ENCODE measurements at regions of chr22 and their contacts with region 1.

Region 1: GRCh38 chr22:41697126-41697775 is 2.1 kb upstream of the MEI1 start:
- DNase-seq: peak; percentile 78 to 98 (median 88)
- ATAC-seq: peak; percentile 81
- H3K4me3 ChIP-seq: no peak overlapping the region
- H3K4me3 Mint-ChIP-seq: peak overlapping the region; percentile 64
- H3K27ac ChIP-seq: no peak overlapping the region
- H3K27ac Mint-ChIP-seq: no peak overlapping the region
- H3K4me1 ChIP-seq: peaks cover 16% of the 10 kb centered on the region
- H3K4me1 Mint-ChIP-seq: peaks cover 10% of the 10 kb centered on the region
- H3K27me3 ChIP-seq: no peaks in the 10 kb centered on the region
- H3K27me3 Mint-ChIP-seq: no peaks in the 10 kb centered on the region
- CTCF ChIP-seq: peak; percentile 89

Region 2: DNA sequence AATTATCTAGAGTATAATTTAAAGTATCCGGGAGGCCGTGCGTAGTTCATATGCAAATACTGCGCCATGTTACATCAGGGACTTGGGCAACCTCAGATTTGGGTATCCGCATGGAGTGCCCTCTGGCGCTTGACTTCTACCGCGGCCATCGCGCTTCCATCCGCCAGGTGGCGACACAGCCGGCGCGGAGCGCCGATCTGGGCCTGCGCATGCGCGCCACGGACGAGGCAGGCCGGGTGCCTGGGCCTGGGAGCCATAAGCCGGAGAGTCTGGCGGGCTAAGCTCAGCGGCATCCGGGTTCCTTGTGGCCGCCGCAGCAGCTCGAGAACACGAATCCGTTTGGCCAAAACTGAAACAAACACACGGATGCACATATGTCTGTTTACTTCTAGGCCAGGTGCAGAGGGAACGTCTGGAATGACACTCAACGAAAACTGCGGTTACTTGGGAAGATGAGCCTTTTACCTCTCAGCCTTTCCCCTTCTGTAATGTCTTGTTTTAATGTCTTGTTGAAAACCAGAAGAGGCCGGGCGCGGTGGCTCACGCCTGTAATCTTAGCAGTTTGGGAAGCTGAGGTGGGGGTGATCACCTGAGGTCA is 30.5 kb before region 1 on chr22:
- CTCF ChIA-PET with region 1: interaction called, 21 read pairs
- POLR2A ChIA-PET with region 1: interaction called, 3 read pairs
- intact Hi-C with region 1: no loop called
- DNase-seq: peak; percentile 89 to 97 (median 92)
- ATAC-seq: peak; percentile 94
- H3K4me3 ChIP-seq: peak overlapping the region; percentile 30 to 46
- H3K4me3 Mint-ChIP-seq: peak overlapping the region; percentile 84
- H3K27ac ChIP-seq: peak overlapping the region; percentile 57 to 85
- H3K27ac Mint-ChIP-seq: peak overlapping the region; percentile 96
- H3K4me1 ChIP-seq: peaks cover 9% of the 10 kb centered on the region
- H3K4me1 Mint-ChIP-seq: peaks cover 7% of the 10 kb centered on the region
- H3K27me3 ChIP-seq: no peaks in the 10 kb centered on the region
- H3K27me3 Mint-ChIP-seq: no peaks in the 10 kb centered on the region
- CTCF ChIP-seq: peak; percentile 94

Region 3: DNA sequence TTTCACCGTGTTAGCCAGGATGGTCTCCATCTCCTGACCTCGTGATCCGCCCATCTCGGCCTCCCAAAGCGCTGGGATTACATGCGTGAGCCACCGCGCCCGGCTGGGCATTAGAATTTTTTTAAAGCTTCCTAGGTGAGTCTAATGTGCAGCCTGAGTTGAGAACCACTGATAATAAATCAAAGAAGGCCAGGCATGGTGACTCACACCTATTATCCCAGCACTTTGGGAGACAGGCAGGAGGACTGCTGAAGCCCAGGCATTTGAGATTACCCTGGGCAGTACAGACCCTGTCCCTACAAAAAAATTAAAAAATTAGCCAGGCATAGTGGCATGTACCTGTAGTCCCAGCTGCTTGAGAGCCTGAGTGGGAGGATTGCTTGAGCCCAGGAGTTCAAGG is 15.8 kb after region 1 on chr22:
- CTCF ChIA-PET with region 1: interaction called, 24 read pairs
- POLR2A ChIA-PET with region 1: no interaction called
- intact Hi-C with region 1: no loop called
- DNase-seq: no peak
- ATAC-seq: no peak
- H3K4me3 ChIP-seq: no peak overlapping the region
- H3K4me3 Mint-ChIP-seq: no peak overlapping the region
- H3K27ac ChIP-seq: no peak overlapping the region
- H3K27ac Mint-ChIP-seq: no peak overlapping the region
- H3K4me1 ChIP-seq: no peaks in the 10 kb centered on the region
- H3K4me1 Mint-ChIP-seq: no peaks in the 10 kb centered on the region
- H3K27me3 ChIP-seq: no peaks in the 10 kb centered on the region
- H3K27me3 Mint-ChIP-seq: no peaks in the 10 kb centered on the region
- CTCF ChIP-seq: no peak

Region 4: DNA sequence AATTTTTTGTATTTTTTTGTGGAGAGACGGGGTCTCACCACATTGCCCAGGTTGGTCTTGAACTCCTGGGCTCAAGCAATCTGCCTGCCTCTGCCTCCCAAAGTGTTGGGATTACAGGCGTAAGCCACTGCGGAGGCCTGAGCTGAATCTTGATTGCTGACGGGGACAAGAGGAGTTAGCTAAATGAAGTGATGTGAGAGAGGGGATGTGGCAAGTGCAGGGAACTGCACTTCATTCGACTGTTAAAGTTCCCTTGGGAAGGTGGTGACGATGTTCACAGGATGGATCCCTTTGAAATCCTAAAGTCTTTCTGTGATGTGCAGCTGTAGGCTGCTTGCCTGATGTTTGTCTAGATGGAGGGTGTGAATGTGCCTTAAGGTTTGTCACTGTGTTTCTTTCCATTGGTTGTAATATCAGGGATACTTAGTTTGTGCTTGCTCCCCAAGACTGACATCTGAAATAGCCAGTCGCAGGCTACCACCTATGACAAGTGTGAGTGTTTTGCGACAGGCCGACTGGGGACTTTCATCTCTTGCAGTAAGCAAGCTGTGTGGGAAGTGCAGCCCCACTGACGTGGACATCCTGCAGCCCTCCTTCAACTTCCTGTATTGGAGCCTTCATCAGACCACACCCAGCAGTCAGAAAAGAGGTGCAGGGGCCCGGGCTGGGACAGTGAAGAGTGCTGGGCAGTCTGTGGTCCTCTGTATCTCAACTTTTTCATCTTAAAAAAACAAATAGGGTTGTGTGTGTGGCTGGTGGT is 83.7 kb after region 1 on chr22:
- CTCF ChIA-PET with region 1: interaction called, 7 read pairs
- POLR2A ChIA-PET with region 1: interaction called, 4 read pairs
- intact Hi-C with region 1: loop called in 1 of 2 experiments (anchors 5 kb)
- DNase-seq: peak; percentile 77 to 99 (median 90)
- ATAC-seq: peak; percentile 92
- H3K4me3 ChIP-seq: peak overlapping the region; percentile 64 to 69
- H3K4me3 Mint-ChIP-seq: peak overlapping the region; percentile 89
- H3K27ac ChIP-seq: peak overlapping the region; percentile 86
- H3K27ac Mint-ChIP-seq: peak overlapping the region; percentile 99
- H3K4me1 ChIP-seq: peaks cover 32% of the 10 kb centered on the region
- H3K4me1 Mint-ChIP-seq: peaks cover 57% of the 10 kb centered on the region
- H3K27me3 ChIP-seq: no peaks in the 10 kb centered on the region
- H3K27me3 Mint-ChIP-seq: no peaks in the 10 kb centered on the region
- CTCF ChIP-seq: no peak

Region 5: GRCh38 chr22:41832553-41833368 is 135.5 kb after region 1 on chr22 and contains the start of gene SREBF2:
- CTCF ChIA-PET with region 1: interaction called, 6 read pairs
- POLR2A ChIA-PET with region 1: interaction called, 6 read pairs
- intact Hi-C with region 1: loop called in 1 of 2 experiments (anchors 5 kb)
- DNase-seq: peak; percentile 97 to 100 (median 99)
- ATAC-seq: peak; percentile 94
- H3K4me3 ChIP-seq: peak within 1 kb of the TSS; percentile 76 to 84
- H3K4me3 Mint-ChIP-seq: peak within 1 kb of the TSS; percentile 97
- H3K27ac ChIP-seq: peak within 1 kb of the TSS; percentile 85 to 97
- H3K27ac Mint-ChIP-seq: peak within 1 kb of the TSS; percentile 100
- H3K4me1 ChIP-seq: peaks cover 15% of the 10 kb centered on the region
- H3K4me1 Mint-ChIP-seq: peaks cover 31% of the 10 kb centered on the region
- H3K27me3 ChIP-seq: no peaks in the 10 kb centered on the region
- H3K27me3 Mint-ChIP-seq: no peaks in the 10 kb centered on the region
- CTCF ChIP-seq: no peak
- total RNA-seq, gene SREBF2: 109 to 122 TPM

Region 6: DNA sequence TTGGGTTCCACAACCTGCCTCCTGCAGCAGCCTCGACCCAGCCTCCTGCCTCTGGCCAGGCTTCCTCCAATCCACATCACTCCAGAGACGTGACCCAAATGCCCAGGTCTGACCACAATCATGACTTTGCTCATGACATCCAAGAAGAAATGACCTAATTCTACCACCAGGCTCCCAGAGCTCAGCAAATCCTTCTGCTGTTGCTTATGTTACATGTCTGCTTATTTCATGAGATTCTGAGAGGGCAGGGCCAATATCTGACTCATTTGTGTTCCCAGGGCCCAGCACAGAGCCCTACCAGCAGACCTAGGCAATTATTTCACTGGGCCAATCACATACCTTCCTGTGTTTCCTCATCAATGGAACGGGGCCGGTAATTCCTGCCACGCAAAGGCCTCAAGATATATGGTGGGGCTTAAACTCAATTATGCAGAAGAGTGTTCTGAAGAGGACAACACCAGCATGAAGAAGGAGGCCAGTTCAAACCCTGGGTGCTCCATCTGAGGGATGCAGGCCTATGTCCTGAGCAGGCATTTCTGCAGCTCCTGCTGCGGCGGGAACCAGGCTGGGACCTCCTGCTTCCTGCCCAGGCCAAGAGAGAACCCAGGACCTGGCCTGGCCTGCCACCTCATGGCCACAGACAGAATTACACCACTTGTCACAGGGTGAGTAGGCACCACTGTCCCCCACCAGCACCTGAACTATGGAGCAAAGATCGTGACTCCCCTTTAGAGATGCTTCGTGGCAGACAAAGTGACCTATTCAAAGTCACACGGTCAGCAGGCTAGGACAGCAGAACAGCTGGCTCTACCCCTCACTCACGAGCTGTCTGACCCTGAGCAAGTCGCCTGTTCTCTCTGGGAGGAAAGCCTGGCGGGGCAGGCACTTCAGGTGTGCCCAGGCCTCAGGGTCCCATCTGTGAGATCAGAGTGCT is 243.8 kb after region 1 on chr22:
- CTCF ChIA-PET with region 1: interaction called, 88 read pairs
- POLR2A ChIA-PET with region 1: interaction called, 29 read pairs
- intact Hi-C with region 1: loop called (anchors 1 kb)
- DNase-seq: peak; percentile 76 to 93 (median 86)
- ATAC-seq: peak; percentile 65
- H3K4me3 ChIP-seq: peak overlapping the region in 1 of 2 experiments; percentile 15
- H3K4me3 Mint-ChIP-seq: peak overlapping the region; percentile 36
- H3K27ac ChIP-seq: peak overlapping the region; percentile 83 to 96
- H3K27ac Mint-ChIP-seq: peak overlapping the region; percentile 98
- H3K4me1 ChIP-seq: peaks cover 29% of the 10 kb centered on the region
- H3K4me1 Mint-ChIP-seq: peaks cover 35% of the 10 kb centered on the region
- H3K27me3 ChIP-seq: no peaks in the 10 kb centered on the region
- H3K27me3 Mint-ChIP-seq: no peaks in the 10 kb centered on the region
- CTCF ChIP-seq: peak; percentile 98

Region 7: DNA sequence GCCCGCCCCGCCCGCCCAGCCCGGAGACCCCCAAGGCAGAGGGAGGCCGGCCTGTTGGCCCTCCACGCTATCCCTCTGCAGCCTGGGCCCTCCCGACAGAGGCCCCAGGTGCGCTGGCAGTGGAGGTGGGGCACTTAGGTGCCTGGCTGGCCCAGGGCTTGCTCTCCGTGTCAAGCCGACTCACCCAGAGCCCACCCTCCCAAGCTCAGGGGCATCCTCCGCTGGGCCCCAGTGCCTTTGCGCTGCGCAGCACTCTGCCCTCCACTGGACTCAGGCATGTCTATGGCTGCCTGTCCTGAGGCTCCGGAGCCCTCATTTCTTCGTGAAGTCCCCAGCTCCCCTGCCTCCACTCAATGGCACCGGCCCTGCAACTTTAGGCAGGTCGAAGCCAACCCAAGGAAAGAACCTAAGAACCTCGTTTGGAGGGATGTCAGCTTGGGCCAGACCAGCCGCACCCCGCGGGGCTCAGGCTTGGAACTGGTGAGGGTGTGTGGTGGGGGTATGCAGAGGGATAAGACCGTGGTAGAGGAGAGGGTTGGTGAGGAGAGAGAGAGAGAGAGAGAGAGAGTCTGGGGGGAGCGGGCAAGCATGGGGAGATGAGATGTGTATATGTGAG is 260.8 kb after region 1 on chr22:
- CTCF ChIA-PET with region 1: interaction called, 14 read pairs
- POLR2A ChIA-PET with region 1: no interaction called
- intact Hi-C with region 1: loop called (anchors 1 kb)
- DNase-seq: peak in 1 of 9 experiments; percentile 32
- ATAC-seq: peak; percentile 35
- H3K4me3 ChIP-seq: no peak overlapping the region
- H3K4me3 Mint-ChIP-seq: peak overlapping the region; percentile 11
- H3K27ac ChIP-seq: no peak overlapping the region
- H3K27ac Mint-ChIP-seq: no peak overlapping the region
- H3K4me1 ChIP-seq: no peaks in the 10 kb centered on the region
- H3K4me1 Mint-ChIP-seq: peaks cover 3% of the 10 kb centered on the region
- H3K27me3 ChIP-seq: peaks cover 0 to 6% of the 10 kb centered on the region in 2 experiments
- H3K27me3 Mint-ChIP-seq: no peaks in the 10 kb centered on the region
- CTCF ChIP-seq: peak; percentile 53